GM18951 (cell line): ENCODE measurements at regions of chr2 and their contacts with region 1.

Region 1: DNA sequence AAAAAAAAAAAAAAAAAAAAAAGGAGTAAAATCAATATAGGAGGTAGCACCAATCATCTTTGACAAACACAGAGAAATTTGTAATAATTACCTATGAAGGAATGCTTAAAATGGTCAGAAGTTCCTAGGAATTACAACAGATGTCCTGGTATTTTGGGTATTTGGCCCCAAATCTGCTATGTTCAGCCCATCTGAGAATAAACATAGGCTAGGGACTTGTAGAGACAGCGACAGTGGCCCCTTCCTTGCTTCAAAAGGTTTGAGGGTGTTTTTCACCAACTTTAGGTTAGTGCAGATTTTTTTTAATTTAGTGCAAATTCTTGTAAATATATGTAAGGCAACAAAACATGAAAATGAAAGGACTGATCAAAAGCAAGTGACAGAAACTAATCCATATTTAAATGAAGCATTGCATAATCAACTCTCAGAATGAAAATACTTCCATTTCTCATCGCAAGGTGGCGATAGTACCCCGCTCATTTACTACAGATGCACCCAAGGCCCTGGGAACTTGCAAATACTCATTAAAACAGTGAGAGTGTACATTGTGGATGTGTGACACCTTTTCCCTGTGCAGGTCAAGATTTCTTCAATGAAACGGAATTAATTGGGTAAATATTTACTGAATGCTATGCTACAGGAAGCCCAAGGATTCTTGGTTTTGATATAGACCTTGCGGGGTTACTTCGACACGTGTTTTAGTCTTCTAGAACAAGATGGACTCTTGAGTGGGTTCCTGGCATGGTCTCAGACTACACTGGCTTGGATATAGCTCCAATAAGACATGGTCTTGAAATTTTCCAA is 44.6 kb downstream of the FAM124B start:
- POLR2A ChIP-seq: no peak

Region 2: GRCh38 chr2:224190936-224191270 is 166.4 kb before region 1 on chr2:
- in situ Hi-C with region 1: no loop called
- POLR2A ChIP-seq: no peak

Region 3: GRCh38 chr2:224646242-224646846 is 289.0 kb after region 1 on chr2:
- in situ Hi-C with region 1: loop called (anchors 5 kb)
- POLR2A ChIP-seq: no peak

Region 4: GRCh38 chr2:224778474-224778877 is 421.2 kb after region 1 on chr2:
- in situ Hi-C with region 1: loop called (anchors 10 kb)
- POLR2A ChIP-seq: no peak

Region 5: GRCh38 chr2:224922142-224922727 is 564.9 kb after region 1 on chr2:
- in situ Hi-C with region 1: no loop called
- POLR2A ChIP-seq: no peak

Region 6: GRCh38 chr2:224987733-224988132 is 630.4 kb after region 1 on chr2:
- in situ Hi-C with region 1: no loop called
- POLR2A ChIP-seq: no peak